ENCODE measurements at regions of chr2 and their contacts with region 1.

Region 1: DNA sequence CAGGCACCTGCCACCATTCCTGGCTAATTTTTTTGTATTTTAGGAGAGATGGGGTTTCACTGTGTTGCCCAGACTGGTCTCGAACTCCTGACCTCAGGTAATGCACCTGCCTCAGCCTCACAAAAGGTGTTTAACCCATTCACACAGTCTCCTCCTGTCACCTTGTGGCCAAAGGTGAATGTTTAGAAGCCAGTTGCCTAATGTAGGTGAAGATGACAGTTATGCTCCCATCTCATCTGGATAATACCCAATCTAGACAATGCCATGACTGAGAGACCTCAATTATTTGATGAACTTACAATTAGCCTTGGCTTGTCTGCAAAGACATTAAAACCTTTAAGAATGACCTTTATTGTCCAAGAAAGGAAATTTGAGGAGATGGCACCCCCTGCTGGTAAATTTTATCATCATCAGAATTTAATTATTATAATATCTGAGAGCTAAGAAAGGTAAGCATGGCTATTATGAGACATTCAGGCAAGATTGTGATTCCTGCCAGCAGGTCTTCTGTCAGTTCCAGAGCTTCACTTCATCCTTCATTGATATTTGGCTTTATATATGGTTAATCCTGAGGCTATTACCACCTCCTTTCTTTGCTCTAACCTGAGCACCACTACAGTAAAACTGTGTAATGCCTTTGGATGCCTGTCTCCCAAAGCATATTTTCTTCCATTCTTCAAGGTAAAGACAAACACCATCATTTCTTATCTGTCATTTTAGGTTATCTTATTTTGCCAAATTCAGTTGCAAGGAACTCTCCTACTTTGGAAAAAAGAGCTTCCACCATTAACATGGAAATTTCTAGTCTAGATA is 117.6 kb downstream of the FAM124B start:
- DNase-seq: peak; percentile 64
- ATAC-seq: no peak
- H3K4me3 ChIP-seq: no peak overlapping the region
- H3K4me3 Mint-ChIP-seq: no peak overlapping the region
- H3K27ac ChIP-seq: no peak overlapping the region
- H3K27ac Mint-ChIP-seq: no peak overlapping the region
- H3K4me1 ChIP-seq: no peaks in the 10 kb centered on the region
- H3K4me1 Mint-ChIP-seq: no peaks in the 10 kb centered on the region
- H3K27me3 ChIP-seq: peaks cover 0 to 10% (median 0%) of the 10 kb centered on the region in 4 experiments
- H3K27me3 Mint-ChIP-seq: peaks cover 34% of the 10 kb centered on the region
- CTCF ChIP-seq: peak; percentile 82

Region 2: DNA sequence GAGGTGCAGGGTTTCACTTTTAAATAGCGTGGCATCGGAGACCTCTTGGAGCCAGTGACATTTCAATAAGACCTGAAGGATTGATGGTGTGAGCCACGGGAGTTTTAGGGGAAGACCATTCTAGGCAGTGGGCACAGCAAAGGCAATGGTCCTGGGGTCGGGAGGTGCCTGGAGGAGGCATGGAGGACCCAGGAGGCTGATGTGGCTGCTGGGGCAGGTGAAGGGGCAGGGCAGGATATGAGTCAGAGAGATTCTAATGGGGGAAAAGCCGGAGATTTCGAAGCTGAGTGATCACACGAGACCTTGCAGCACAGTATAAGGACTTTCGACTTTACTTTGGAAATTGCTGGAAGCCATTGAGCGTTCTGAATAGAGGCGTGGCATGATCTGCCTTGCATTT is 1311.9 kb before region 1 on chr2:
- CTCF ChIA-PET with region 1: interaction called, 14 read pairs
- POLR2A ChIA-PET with region 1: no interaction called
- intact Hi-C with region 1: no loop called
- DNase-seq: no peak
- ATAC-seq: no peak
- H3K4me3 ChIP-seq: no peak overlapping the region
- H3K4me3 Mint-ChIP-seq: no peak overlapping the region
- H3K27ac ChIP-seq: no peak overlapping the region
- H3K27ac Mint-ChIP-seq: no peak overlapping the region
- H3K4me1 ChIP-seq: peaks cover 0 to 7% of the 10 kb centered on the region in 2 donors
- H3K4me1 Mint-ChIP-seq: no peaks in the 10 kb centered on the region
- H3K27me3 ChIP-seq: peaks cover 0 to 10% (median 0%) of the 10 kb centered on the region in 4 experiments
- H3K27me3 Mint-ChIP-seq: peaks cover 29% of the 10 kb centered on the region
- CTCF ChIP-seq: no peak

Region 3: DNA sequence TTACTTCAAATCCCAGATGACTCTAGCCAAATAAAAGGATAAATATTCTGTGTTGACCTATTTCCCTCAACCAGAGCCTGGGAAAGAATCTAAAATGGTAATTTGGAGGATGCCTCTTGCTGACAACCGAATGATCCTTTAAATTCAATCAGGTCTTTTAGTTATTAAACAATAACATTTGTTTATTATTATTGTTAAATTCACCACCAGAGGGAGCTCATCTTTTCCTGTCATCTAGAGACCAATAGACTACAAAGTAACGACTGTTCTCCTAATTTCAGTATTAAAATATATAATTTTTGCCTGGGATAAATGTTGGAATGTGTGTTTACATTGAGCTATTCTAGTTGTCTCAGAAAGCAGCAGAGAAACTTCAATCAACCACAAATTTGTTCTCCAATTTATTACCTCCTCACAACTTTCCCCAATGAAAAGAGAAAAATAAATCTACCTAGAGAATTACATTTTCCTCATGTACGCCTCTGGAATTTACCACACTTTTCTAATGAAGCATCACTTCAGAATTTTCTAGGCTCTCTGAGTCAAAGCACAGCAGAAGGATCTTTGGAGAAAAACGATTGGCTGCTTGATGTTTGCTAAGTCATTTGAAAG is 824.9 kb before region 1 on chr2:
- CTCF ChIA-PET with region 1: interaction called, 4 read pairs
- POLR2A ChIA-PET with region 1: no interaction called
- intact Hi-C with region 1: loop called (anchors 5 kb)
- DNase-seq: no peak
- ATAC-seq: no peak
- H3K4me3 ChIP-seq: no peak overlapping the region
- H3K4me3 Mint-ChIP-seq: no peak overlapping the region
- H3K27ac ChIP-seq: no peak overlapping the region
- H3K27ac Mint-ChIP-seq: no peak overlapping the region
- H3K4me1 ChIP-seq: no peaks in the 10 kb centered on the region
- H3K4me1 Mint-ChIP-seq: no peaks in the 10 kb centered on the region
- H3K27me3 ChIP-seq: no peaks in the 10 kb centered on the region
- H3K27me3 Mint-ChIP-seq: peaks cover 3% of the 10 kb centered on the region
- CTCF ChIP-seq: peak; percentile 35

Measured in B cell (primary cell).